ENCODE measurements at regions of chr2 and their contacts with region 1.

Region 1: GRCh38 chr2:187138265-187138664 is 289.3 kb upstream of the ZSWIM2 start:
- DNase-seq: peak; percentile 21
- H3K4me3 ChIP-seq: no peak overlapping the region
- H3K27ac ChIP-seq: no peak overlapping the region
- H3K4me1 ChIP-seq: no peaks in the 10 kb centered on the region
- H3K27me3 ChIP-seq: no peaks in the 10 kb centered on the region
- CTCF ChIP-seq: peak; percentile 46 to 77

Region 2: DNA sequence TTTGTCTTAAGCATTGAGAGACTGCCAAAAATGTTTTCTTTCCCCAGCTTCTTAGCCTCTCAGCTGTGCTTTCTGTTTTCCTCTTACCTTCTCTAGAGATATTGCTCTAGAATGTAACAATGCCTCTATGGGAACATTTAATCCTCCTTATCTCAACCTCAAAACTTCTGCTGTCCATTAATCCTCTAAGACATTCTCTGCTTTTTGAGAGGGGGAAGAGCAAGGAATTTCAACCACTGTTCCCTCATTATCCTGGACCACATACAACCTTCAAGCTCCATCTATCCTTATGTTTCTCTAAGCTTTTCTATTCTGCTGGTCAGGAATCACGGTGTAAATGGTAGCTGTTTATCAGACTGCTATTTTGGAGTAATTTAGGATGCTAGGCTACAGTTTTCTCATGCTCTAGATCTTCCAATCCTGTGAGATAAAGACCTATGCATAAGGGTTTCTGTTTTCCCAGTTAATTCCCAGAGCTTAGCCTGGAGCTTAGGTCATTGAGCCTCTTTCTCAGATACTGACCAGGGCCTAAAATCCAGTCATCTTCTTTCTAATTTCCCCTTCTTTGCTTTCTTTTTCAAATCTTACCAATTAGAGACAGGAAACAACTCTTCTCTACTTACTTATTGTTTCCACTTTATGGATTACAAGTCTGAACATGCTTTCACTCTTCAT is 27.8 kb after region 1 on chr2:
- CTCF ChIA-PET with region 1: interaction called, 10 read pairs
- dilution Hi-C with region 1: no loop called
- in situ Hi-C with region 1: no loop called
- intact Hi-C with region 1: no loop called
- DNase-seq: peak; percentile 3
- H3K4me3 ChIP-seq: no peak overlapping the region
- H3K27ac ChIP-seq: no peak overlapping the region
- H3K4me1 ChIP-seq: no peaks in the 10 kb centered on the region
- H3K27me3 ChIP-seq: no peaks in the 10 kb centered on the region
- CTCF ChIP-seq: no peak